Right ventricle myocardium inferior (tissue), 1 donor: ENCODE measurements at regions of chr11 and their contacts with region 1.

Region 1: GRCh38 chr11:19071255-19071654 is 10.7 kb upstream of the MRGPRX2 start:
- DNase-seq: peak; percentile 71
- ATAC-seq: peak; percentile 93

Region 2: GRCh38 chr11:19240420-19241259 is 169.4 kb after region 1 on chr11 and contains the start of gene E2F8:
- intact Hi-C with region 1: loop called (anchors 10 kb)
- DNase-seq: peak; percentile 94
- ATAC-seq: peak; percentile 97
- total RNA-seq, gene E2F8: 1.7 TPM